ENCODE measurements at regions of chr2 and their contacts with region 1.

Region 1: GRCh38 chr2:73314441-73314840 is 21.1 kb upstream of the EGR4 start:
- DNase-seq: no peak
- H3K4me3 ChIP-seq: no peak overlapping the region
- H3K27ac ChIP-seq: no peak overlapping the region
- H3K4me1 ChIP-seq: no peaks in the 10 kb centered on the region
- H3K27me3 ChIP-seq: no peaks in the 10 kb centered on the region
- CTCF ChIP-seq: no peak
- POLR2A ChIP-seq: no peak

Region 2: DNA sequence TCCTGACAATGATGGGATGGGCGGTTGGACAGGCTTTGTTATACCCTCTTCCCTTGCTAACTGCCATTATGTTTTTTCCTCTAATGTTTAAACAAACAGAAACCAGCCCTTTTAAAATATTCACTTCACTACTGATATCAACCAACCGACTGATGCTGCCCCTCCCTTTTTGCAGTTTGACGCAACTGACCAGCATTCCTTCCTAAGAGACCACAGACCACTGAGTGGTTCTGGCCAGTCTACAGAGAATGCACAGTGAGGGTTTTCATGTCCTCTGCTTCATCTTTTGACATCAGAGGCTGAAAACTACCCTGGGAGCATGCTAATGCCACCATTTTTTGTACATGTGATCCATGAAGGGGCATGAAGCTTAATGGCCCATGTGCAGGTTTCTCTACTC is 1252.1 kb before region 1 on chr2:
- intact Hi-C with region 1: loop called (anchors 10 kb)
- DNase-seq: no peak
- H3K4me3 ChIP-seq: no peak overlapping the region
- H3K27ac ChIP-seq: no peak overlapping the region
- H3K4me1 ChIP-seq: no peaks in the 10 kb centered on the region
- H3K27me3 ChIP-seq: no peaks in the 10 kb centered on the region
- CTCF ChIP-seq: no peak
- POLR2A ChIP-seq: no peak

Region 3: GRCh38 chr2:72813841-72814240 is 500.6 kb before region 1 on chr2:
- intact Hi-C with region 1: no loop called
- DNase-seq: no peak
- H3K4me3 ChIP-seq: no peak overlapping the region
- H3K27ac ChIP-seq: no peak overlapping the region
- H3K4me1 ChIP-seq: peaks cover 9% of the 10 kb centered on the region
- H3K27me3 ChIP-seq: no peaks in the 10 kb centered on the region
- CTCF ChIP-seq: no peak
- POLR2A ChIP-seq: no peak

Measured in vagina (tissue), 2 donors.